GM18951 (cell line): ENCODE measurements at regions of chr2 and their contacts with region 1.

Region 1: GRCh38 chr2:197804049-197804757 is at the start of gene PLCL1:
- POLR2A ChIP-seq: no peak

Region 2: GRCh38 chr2:197345846-197346370 is 458.3 kb before region 1 on chr2:
- in situ Hi-C with region 1: no loop called
- POLR2A ChIP-seq: no peak

Region 3: DNA sequence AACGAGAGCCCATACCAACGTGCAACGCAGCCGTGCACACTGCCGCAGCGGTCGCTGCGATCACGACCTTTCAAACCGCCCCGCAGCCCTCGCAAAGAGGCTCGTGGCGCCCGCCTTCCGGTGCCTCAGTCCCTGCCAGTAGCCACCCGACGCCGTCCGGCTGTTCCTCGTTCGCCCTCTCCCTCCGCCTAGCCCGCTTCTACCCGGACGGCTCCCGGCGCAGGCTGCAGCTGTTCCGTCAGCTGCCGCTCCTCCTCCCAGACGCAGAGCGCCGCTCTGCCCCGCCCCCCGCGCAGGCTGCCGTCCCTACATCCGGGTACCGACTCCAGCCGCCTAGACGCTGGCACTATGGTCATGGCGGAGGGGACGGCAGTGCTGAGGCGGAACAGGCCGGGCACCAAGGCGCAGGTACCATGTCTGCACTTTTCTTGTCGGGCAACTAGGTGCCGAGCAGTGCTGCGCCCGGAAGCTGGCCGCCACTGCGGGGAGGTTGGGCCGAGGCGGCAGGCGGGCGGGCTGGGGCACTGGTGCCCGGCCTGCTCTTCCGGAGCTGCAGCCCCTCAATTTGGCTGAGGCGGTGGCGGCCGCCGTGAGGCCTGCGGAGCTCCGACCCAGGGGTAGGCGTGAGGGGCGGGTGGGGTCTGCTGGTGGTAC is 288.3 kb before region 1 on chr2 and contains the start of gene MOB4:
- in situ Hi-C with region 1: no loop called
- POLR2A ChIP-seq: peak; percentile 97

Region 4: DNA sequence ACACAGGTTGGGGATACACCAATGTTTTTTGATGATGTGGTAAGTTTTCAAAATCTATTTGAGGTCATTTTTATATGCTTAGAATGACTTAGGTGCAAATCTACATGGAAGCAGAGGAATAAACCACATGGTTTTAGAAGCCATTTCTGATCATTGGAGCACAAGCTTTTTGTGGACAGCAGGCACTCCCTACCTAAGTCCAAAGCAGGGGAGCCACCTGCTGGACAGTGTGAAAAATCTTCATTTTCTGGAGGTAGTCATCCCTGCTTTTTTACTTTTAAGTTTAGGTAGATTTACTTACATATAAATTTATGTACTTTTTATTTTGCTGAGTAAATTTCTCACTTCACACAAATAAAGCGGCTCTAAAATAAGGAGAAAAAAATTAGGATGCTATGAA is 323.4 kb after region 1 on chr2:
- in situ Hi-C with region 1: loop called (anchors 10 kb)
- POLR2A ChIP-seq: no peak

Region 5: GRCh38 chr2:198296665-198297308 is 492.6 kb after region 1 on chr2:
- in situ Hi-C with region 1: loop called (anchors 25 kb)
- POLR2A ChIP-seq: no peak